ENCODE measurements at regions of chr10 and their contacts with region 1.

Region 1: GRCh38 chr10:68600041-68600778 is 40.1 kb downstream of the TET1 start:
- DNase-seq: peak; percentile 81

Region 2: GRCh38 chr10:68406815-68407548 is 193.2 kb before region 1 on chr10 and contains the start of gene RUFY2:
- intact Hi-C with region 1: no loop called
- DNase-seq: peak; percentile 92
- total RNA-seq, gene RUFY2: 12.0 TPM

Region 3: GRCh38 chr10:68526626-68527307 is 73.4 kb before region 1 on chr10:
- intact Hi-C with region 1: loop called (anchors 5 kb)
- DNase-seq: no peak

Region 4: GRCh38 chr10:68560186-68560942 is 39.8 kb before region 1 on chr10 and contains the start of gene TET1:
- intact Hi-C with region 1: loop called (anchors 5 kb)
- DNase-seq: no peak
- total RNA-seq, gene TET1: 1.2 TPM

Region 5: GRCh38 chr10:68636335-68636734 is 36.1 kb after region 1 on chr10:
- intact Hi-C with region 1: no loop called
- DNase-seq: no peak

Measured in cardiac septum (tissue), 1 donor.